Dendritic cell treated with granulocyte-macrophage colony-stimulating factor and Interleukin-4, amounts not matched to agents 40 ng/mL and 50 ng/mL, for 4 days (primary cell): ENCODE measurements at regions of chr10 and their contacts with region 1.

Region 1: DNA sequence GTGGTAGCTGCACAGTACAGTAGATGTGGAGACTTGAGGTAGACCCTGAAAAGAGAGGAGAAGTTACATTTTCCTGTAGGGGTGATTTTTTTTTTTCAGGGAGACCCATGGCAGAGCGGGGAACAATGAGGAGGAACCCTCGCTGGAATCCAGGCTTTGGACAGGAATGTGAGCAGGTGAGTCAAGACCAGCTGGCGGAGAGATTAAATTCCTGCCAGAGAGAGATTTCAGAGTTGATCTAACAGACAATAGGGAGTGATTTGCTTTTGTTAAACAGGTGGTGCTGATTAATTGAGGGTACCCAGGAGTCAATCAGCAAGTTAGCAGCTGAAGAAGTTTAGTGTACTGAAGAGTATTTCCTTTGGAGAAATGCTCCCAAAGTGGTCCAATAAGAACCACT is 41.6 kb upstream of the MINDY3 start:
- H3K4me3 Mint-ChIP-seq: no peak overlapping the region
- H3K27ac Mint-ChIP-seq: no peak overlapping the region
- H3K4me1 Mint-ChIP-seq: no peaks in the 10 kb centered on the region
- H3K27me3 Mint-ChIP-seq: peaks cover 10% of the 10 kb centered on the region

Region 2: DNA sequence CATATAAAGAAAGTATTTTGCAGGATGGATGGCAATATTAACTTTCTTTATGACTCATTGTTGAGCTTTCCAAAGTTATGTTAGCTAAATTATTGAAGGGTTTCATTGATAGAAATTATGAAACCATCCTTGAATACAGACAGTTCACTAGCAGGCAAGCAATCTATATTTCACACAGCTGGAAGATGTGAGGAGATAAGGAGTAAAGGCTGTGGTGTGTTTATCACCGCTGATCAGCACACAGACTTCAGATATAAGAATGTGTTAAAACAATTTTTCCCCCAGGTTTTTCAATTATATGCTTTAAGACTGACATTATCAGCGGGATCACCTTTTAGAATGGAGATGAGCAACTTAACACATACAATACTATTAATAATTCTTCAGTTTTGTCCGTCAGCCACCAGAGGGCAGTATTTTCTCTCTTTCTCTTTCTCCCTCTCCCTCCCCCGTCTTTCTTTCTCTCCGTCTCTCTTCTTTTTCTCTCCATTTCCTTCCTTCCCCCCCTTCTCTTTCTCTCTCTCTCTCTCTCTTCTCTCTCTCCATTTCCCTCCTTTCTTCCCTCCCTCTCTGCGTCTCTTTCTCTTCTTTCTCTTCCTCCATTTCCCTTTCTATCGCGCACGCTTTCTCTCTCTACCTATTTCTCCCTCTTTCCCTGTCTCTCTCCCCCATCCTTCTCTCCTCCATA is 467.9 kb before region 1 on chr10:
- intact Hi-C with region 1: no loop called
- H3K4me3 Mint-ChIP-seq: peak overlapping the region; percentile 80
- H3K27ac Mint-ChIP-seq: no peak overlapping the region
- H3K4me1 Mint-ChIP-seq: peaks cover 7% of the 10 kb centered on the region
- H3K27me3 Mint-ChIP-seq: peaks cover 8% of the 10 kb centered on the region

Region 3: GRCh38 chr10:15809450-15809849 is 92.4 kb before region 1 on chr10:
- intact Hi-C with region 1: no loop called
- H3K4me3 Mint-ChIP-seq: no peak overlapping the region
- H3K27ac Mint-ChIP-seq: no peak overlapping the region
- H3K4me1 Mint-ChIP-seq: no peaks in the 10 kb centered on the region
- H3K27me3 Mint-ChIP-seq: no peaks in the 10 kb centered on the region

Region 4: DNA sequence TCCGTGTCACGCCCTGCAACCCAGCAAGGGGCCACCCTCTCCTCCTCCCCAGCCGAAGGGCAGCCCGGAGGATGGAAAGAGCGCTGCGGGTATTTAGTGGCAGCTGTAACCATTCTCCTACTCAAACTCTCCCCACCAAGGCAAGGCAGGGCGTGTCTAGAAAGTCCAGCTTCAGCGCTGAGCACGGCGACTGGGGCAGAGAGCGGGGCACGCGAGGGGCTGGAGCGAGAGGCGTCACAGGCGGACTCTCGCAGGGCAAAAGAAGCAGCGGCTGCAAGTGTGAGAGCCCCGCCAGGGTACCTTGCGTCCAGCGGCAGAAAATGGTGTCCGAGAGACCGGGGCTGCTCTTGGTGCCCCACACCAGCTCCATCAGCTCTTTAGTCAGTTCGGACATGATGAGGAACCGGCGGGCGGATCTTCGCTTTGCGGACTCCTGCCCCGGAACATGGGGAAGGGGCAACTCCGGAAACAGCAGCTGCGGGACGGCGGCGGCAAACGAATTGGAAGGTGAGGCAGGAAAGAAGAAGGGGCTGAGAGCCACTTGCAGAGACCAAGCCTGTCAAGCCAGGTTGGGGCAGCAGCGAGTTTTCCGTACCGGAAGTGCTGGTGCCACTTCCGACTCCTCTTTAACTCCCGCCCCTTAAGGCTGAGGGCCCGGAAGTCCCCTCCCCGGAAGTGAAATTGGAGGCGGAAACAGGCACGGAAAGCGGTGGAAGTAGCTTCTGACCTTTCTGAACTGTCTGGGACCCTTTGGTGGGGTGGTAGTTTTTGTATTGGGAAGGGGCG is 41.8 kb before region 1 on chr10 and contains the start of gene MINDY3:
- intact Hi-C with region 1: no loop called
- H3K4me3 Mint-ChIP-seq: peak within 1 kb of the TSS; percentile 100
- H3K27ac Mint-ChIP-seq: peak within 1 kb of the TSS; percentile 94
- H3K4me1 Mint-ChIP-seq: peaks cover 26% of the 10 kb centered on the region
- H3K27me3 Mint-ChIP-seq: peaks cover 14% of the 10 kb centered on the region

Region 5: GRCh38 chr10:16777473-16778370 is 875.8 kb after region 1 on chr10:
- intact Hi-C with region 1: loop called (anchors 2 kb)
- H3K4me3 Mint-ChIP-seq: no peak overlapping the region
- H3K27ac Mint-ChIP-seq: no peak overlapping the region
- H3K4me1 Mint-ChIP-seq: peaks cover 5% of the 10 kb centered on the region
- H3K27me3 Mint-ChIP-seq: no peaks in the 10 kb centered on the region

Region 6: GRCh38 chr10:16809074-16809718 is 907.3 kb after region 1 on chr10:
- intact Hi-C with region 1: loop called (anchors 1 kb)
- H3K4me3 Mint-ChIP-seq: no peak overlapping the region
- H3K27ac Mint-ChIP-seq: no peak overlapping the region
- H3K4me1 Mint-ChIP-seq: peaks cover 19% of the 10 kb centered on the region
- H3K27me3 Mint-ChIP-seq: no peaks in the 10 kb centered on the region